CD8-positive, alpha-beta memory T cell (primary cell): ENCODE measurements at regions of chr16 and their contacts with region 1.

Region 1: GRCh38 chr16:4253394-4254150 is 11.7 kb upstream of the SRL start:
- DNase-seq: peak; percentile 99 to 100 (median 99)
- H3K4me3 ChIP-seq: peak overlapping the region; percentile 91
- H3K4me3 Mint-ChIP-seq: peak overlapping the region; percentile 92 to 96 (median 94)
- H3K27ac ChIP-seq: peak overlapping the region; percentile 79
- H3K27ac Mint-ChIP-seq: peak overlapping the region; percentile 91 to 99 (median 96)
- H3K4me1 ChIP-seq: no peaks in the 10 kb centered on the region
- H3K4me1 Mint-ChIP-seq: peaks cover 5 to 8% (median 6%) of the 10 kb centered on the region in 3 donors
- H3K27me3 ChIP-seq: no peaks in the 10 kb centered on the region
- H3K27me3 Mint-ChIP-seq: no peaks in the 10 kb centered on the region

Region 2: DNA sequence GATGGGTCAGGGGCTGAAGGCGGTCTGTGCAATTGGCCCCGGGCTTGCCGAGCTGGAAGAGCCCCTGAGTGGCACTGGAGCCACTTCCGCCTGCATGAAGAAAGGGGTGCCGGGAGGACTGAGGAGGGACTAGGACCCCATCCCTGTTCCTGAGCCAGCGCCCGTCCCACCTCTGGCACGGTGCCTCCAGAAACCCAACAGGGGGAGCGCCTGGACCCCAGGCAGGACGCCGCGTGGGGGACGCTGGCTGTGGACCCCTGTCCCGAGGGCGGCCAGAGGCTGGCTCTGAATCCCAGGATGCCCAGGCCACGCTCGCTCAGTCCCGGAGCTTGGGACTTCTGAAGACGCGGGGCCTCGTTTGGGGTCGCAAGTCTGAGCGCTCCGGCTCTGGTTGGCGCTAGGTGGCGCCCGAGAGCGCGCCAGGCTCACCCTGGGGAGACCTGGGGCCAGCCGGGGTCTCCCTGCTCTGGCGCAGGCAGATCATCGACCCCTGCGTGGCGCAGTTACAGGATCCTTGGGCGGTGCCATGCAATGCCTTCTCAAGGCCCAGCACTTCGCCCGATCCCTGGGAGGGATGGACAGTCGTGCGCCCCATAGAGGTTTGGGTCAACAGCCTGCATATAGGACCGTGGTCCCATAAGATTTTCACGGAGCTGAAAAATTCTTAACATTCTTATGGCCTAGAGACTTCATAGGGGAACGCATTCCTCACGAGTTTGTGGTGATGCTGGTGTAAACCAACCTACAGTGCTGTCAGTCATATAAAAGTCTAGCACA is 314.5 kb before region 1 on chr16:
- CTCF ChIA-PET with region 1: interaction called, 26 read pairs
- POLR2A ChIA-PET with region 1: no interaction called
- DNase-seq: peak; percentile 45 to 75 (median 58)
- H3K4me3 ChIP-seq: peak overlapping the region; percentile 34
- H3K4me3 Mint-ChIP-seq: peak overlapping the region in 3 of 7 donors; percentile 45 to 53 (median 49)
- H3K27ac ChIP-seq: no peak overlapping the region
- H3K27ac Mint-ChIP-seq: peak overlapping the region in 1 of 8 donors; percentile 57
- H3K4me1 ChIP-seq: peaks cover 10% of the 10 kb centered on the region
- H3K4me1 Mint-ChIP-seq: peaks cover 0 to 10% (median 2%) of the 10 kb centered on the region in 3 donors
- H3K27me3 ChIP-seq: peaks cover 4% of the 10 kb centered on the region
- H3K27me3 Mint-ChIP-seq: peaks cover 5 to 12% of the 10 kb centered on the region in 2 donors

Region 3: GRCh38 chr16:3983081-3983520 is 270.5 kb before region 1 on chr16:
- CTCF ChIA-PET with region 1: interaction called, 20 read pairs
- POLR2A ChIA-PET with region 1: no interaction called
- DNase-seq: peak in 4 of 5 donors; percentile 14 to 59 (median 34)
- H3K4me3 ChIP-seq: no peak overlapping the region
- H3K4me3 Mint-ChIP-seq: peak overlapping the region in 1 of 7 donors; percentile 21
- H3K27ac ChIP-seq: no peak overlapping the region
- H3K27ac Mint-ChIP-seq: peak overlapping the region in 5 of 8 donors; percentile 11 to 43 (median 17)
- H3K4me1 ChIP-seq: no peaks in the 10 kb centered on the region
- H3K4me1 Mint-ChIP-seq: peaks cover 0 to 9% (median 3%) of the 10 kb centered on the region in 3 donors
- H3K27me3 ChIP-seq: no peaks in the 10 kb centered on the region
- H3K27me3 Mint-ChIP-seq: peaks cover 0 to 2% of the 10 kb centered on the region in 2 donors

Region 4: DNA sequence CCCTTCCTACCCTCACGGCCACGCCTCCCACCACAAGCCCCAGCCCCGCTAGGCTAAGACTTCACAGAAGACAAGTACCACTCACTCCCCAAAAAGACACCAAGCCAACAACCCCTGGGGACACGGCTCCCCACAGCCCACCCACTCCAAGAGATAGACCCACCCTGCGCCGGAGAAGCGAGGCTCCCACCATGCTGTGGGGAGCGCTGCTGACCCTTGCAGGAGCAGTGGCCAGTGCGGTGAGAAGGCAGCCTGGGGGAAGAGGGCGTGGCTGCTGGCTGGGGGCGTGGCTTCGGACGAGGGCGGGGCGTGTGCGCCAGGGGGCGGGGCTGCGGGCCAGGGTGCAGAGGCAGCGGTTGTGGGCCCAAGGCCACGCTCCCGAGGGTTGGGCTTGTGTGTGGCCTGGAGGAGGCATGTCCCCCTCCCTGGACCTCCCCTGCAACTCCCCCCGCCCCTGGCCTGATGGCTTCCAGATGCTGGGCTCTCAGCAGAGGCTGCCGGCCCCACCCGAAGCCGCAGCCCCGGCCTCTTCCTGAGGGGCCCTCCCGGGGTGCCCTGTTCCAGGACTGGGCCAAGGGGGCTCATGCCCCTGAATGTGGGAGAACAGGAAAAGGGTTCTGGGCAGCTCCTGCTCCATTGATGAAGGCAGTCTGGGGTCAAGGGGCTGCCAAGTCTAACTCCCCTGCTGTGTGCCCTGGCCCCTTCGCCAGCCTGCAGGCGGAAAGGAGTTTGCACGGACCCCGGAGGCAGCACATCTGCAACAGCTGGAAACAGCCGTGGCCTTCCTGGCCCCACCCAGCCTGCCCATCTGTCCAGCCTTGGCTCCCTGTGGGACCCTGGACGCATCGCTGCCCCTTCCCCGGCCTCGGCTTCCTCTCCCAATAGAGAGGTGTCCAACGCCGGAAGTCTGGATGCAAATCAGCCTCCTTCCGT is 10.2 kb after region 1 on chr16:
- CTCF ChIA-PET with region 1: interaction called, 83 read pairs
- POLR2A ChIA-PET with region 1: no interaction called
- DNase-seq: no peak
- H3K4me3 ChIP-seq: no peak overlapping the region
- H3K4me3 Mint-ChIP-seq: no peak overlapping the region
- H3K27ac ChIP-seq: peak overlapping the region; percentile 4
- H3K27ac Mint-ChIP-seq: peak overlapping the region in 2 of 8 donors; percentile 8 to 19
- H3K4me1 ChIP-seq: no peaks in the 10 kb centered on the region
- H3K4me1 Mint-ChIP-seq: peaks cover 6 to 12% (median 7%) of the 10 kb centered on the region in 3 donors
- H3K27me3 ChIP-seq: no peaks in the 10 kb centered on the region
- H3K27me3 Mint-ChIP-seq: no peaks in the 10 kb centered on the region

Region 5: DNA sequence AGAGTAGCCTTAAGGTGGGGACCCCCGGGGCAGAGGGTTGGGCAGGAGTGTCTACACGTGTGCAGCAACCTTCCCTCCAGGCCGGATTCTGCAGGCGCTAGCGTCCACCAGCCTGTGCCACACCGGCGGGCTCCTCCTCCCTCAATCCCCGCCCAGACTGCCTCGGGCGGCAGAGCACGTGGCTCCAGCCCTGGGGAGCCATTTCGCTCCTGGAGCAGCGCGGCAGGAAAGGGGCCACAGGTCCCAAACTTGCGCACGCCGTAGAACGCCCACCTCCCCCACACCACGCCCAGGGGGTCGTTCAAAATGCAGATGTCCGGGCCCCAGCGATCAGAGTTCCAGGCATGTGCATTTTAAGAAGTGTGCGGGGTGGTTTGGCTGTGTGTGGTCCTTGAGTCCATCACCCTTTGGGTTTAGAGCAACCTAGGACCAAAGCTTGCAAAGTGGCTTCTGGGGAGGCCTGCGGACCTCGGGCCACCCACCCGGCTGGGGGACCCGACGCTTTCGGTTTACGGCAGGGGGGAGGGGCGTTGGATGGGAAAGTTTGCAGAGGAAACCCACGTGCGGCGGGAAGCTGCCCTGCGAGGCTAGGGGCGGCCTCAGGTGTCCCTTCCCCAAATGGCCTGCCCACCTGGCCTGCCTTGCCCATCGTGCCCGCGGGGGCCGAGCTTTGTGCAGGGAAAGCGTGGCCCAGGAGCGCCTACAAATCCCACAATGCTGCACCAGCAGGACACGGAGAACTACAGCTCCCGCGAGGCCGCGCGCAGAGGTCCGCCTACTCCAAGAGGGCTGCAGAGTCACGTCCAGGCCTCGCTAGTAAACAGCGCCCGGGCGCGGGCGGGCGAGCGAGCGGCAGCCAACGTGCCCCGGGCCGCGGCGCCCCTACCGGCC is 17.8 kb after region 1 on chr16:
- CTCF ChIA-PET with region 1: interaction called, 83 read pairs
- POLR2A ChIA-PET with region 1: interaction called, 29 read pairs
- DNase-seq: peak; percentile 80 to 91 (median 82)
- H3K4me3 ChIP-seq: peak overlapping the region; percentile 96
- H3K4me3 Mint-ChIP-seq: peak overlapping the region; percentile 86 to 99 (median 89)
- H3K27ac ChIP-seq: peak overlapping the region; percentile 80
- H3K27ac Mint-ChIP-seq: peak overlapping the region in 7 of 8 donors; percentile 42 to 98 (median 72)
- H3K4me1 ChIP-seq: peaks cover 10% of the 10 kb centered on the region
- H3K4me1 Mint-ChIP-seq: peaks cover 12 to 27% (median 14%) of the 10 kb centered on the region in 3 donors
- H3K27me3 ChIP-seq: no peaks in the 10 kb centered on the region
- H3K27me3 Mint-ChIP-seq: peaks cover 0 to 5% of the 10 kb centered on the region in 2 donors

Region 6: GRCh38 chr16:4307215-4308037 is 53.9 kb after region 1 on chr16:
- CTCF ChIA-PET with region 1: interaction called, 10 read pairs
- POLR2A ChIA-PET with region 1: interaction called, 4 read pairs
- DNase-seq: peak; percentile 97 to 99 (median 98)
- H3K4me3 ChIP-seq: peak overlapping the region; percentile 91
- H3K4me3 Mint-ChIP-seq: peak overlapping the region; percentile 86 to 98 (median 94)
- H3K27ac ChIP-seq: peak overlapping the region; percentile 91
- H3K27ac Mint-ChIP-seq: peak overlapping the region; percentile 97 to 100 (median 100)
- H3K4me1 ChIP-seq: peaks cover 19% of the 10 kb centered on the region
- H3K4me1 Mint-ChIP-seq: peaks cover 16 to 27% (median 18%) of the 10 kb centered on the region in 3 donors
- H3K27me3 ChIP-seq: no peaks in the 10 kb centered on the region
- H3K27me3 Mint-ChIP-seq: peaks cover 0 to 4% of the 10 kb centered on the region in 2 donors

Region 7: GRCh38 chr16:4330277-4330874 is 76.8 kb after region 1 on chr16:
- CTCF ChIA-PET with region 1: interaction called, 22 read pairs
- POLR2A ChIA-PET with region 1: interaction called, 3 read pairs
- DNase-seq: peak; percentile 53 to 74 (median 68)
- H3K4me3 ChIP-seq: no peak overlapping the region
- H3K4me3 Mint-ChIP-seq: no peak overlapping the region
- H3K27ac ChIP-seq: no peak overlapping the region
- H3K27ac Mint-ChIP-seq: no peak overlapping the region
- H3K4me1 ChIP-seq: peaks cover 6% of the 10 kb centered on the region
- H3K4me1 Mint-ChIP-seq: peaks cover 0 to 10% (median 0%) of the 10 kb centered on the region in 3 donors
- H3K27me3 ChIP-seq: no peaks in the 10 kb centered on the region
- H3K27me3 Mint-ChIP-seq: peaks cover 0 to 7% of the 10 kb centered on the region in 2 donors

Region 8: DNA sequence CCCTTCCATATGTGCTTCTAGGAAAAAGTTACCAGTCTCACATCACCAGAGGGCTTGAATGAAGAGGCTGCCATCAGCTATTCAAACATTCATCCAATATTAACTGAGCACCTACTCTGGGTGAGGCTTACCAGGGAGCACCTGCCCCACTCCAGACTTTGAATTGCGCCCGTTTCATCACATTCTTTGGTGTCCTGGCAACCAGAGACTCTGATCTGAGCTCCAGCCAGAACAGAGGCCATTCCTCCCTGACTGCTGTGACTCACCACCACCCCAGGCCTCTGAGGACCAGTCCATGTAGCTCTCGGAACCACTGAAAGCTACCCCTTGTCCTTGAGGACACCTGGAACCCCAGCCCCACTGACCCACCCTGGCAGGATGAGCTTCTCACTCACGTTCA is 302.5 kb after region 1 on chr16 and contains the start of gene C16orf96:
- CTCF ChIA-PET with region 1: no interaction called
- POLR2A ChIA-PET with region 1: no interaction called
- DNase-seq: no peak
- H3K4me3 ChIP-seq: no peak within 1 kb of the TSS
- H3K4me3 Mint-ChIP-seq: no peak within 1 kb of the TSS
- H3K27ac ChIP-seq: no peak within 1 kb of the TSS
- H3K27ac Mint-ChIP-seq: peak within 1 kb of the TSS in 1 of 8 donors; percentile 65
- H3K4me1 ChIP-seq: no peaks in the 10 kb centered on the region
- H3K4me1 Mint-ChIP-seq: no peaks in the 10 kb centered on the region
- H3K27me3 ChIP-seq: no peaks in the 10 kb centered on the region
- H3K27me3 Mint-ChIP-seq: peaks cover 4 to 7% of the 10 kb centered on the region in 2 donors
- total RNA-seq, gene C16orf96: 0.07 to 0.11 TPM

Region 9: GRCh38 chr16:5815570-5816237 is 1562.1 kb after region 1 on chr16:
- CTCF ChIA-PET with region 1: no interaction called
- POLR2A ChIA-PET with region 1: no interaction called
- DNase-seq: no peak
- H3K4me3 ChIP-seq: no peak overlapping the region
- H3K4me3 Mint-ChIP-seq: no peak overlapping the region
- H3K27ac ChIP-seq: no peak overlapping the region
- H3K27ac Mint-ChIP-seq: no peak overlapping the region
- H3K4me1 ChIP-seq: no peaks in the 10 kb centered on the region
- H3K4me1 Mint-ChIP-seq: no peaks in the 10 kb centered on the region
- H3K27me3 ChIP-seq: no peaks in the 10 kb centered on the region
- H3K27me3 Mint-ChIP-seq: no peaks in the 10 kb centered on the region